Activated T-helper 1 cell treated with anti-CD3 and anti-CD28 coated beads, Interleukin-12 subunit alpha, Interleukin-12 subunit beta, Interleukin-2, Interleukin-4 antibody, amounts not matched to agents 30 ng/mL and 10 ng/mL and 1 ng/mL, durations not matched to agents 14 hours and 24 hours and 36 hours (primary cell): ENCODE measurements at regions of chr2 and their contacts with region 1.

Region 1: GRCh38 chr2:232444409-232445148 is 11.4 kb upstream of the ALPI start:
- DNase-seq: peak; percentile 57
- H3K4me3 Mint-ChIP-seq: no peak overlapping the region
- H3K27ac Mint-ChIP-seq: no peak overlapping the region
- H3K4me1 Mint-ChIP-seq: peaks cover 4% of the 10 kb centered on the region
- H3K27me3 Mint-ChIP-seq: peaks cover 2% of the 10 kb centered on the region

Region 2: DNA sequence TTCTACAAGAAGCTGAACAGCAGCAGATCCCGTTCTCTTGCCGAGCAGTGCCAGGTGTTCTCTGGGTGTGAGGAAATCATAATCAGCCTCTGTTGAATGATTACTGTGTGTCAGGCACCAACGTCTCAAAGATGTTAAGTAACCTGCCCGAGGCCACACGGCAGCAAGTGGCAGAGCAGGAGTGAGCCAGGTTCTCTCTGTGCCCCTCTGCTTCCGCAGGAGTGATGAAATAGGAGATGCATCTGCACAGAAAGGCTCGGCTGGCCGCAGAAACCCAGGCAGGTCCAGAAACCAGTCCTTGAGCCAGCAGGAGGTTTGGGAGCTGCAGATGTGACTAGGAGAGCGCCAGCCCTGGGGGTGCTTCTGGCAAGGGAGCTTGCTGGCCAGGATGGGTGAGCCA is 589.9 kb before region 1 on chr2:
- intact Hi-C with region 1: loop called (anchors 1 kb)
- DNase-seq: no peak
- H3K4me3 Mint-ChIP-seq: no peak overlapping the region
- H3K27ac Mint-ChIP-seq: no peak overlapping the region
- H3K4me1 Mint-ChIP-seq: no peaks in the 10 kb centered on the region
- H3K27me3 Mint-ChIP-seq: peaks cover 1% of the 10 kb centered on the region

Region 3: DNA sequence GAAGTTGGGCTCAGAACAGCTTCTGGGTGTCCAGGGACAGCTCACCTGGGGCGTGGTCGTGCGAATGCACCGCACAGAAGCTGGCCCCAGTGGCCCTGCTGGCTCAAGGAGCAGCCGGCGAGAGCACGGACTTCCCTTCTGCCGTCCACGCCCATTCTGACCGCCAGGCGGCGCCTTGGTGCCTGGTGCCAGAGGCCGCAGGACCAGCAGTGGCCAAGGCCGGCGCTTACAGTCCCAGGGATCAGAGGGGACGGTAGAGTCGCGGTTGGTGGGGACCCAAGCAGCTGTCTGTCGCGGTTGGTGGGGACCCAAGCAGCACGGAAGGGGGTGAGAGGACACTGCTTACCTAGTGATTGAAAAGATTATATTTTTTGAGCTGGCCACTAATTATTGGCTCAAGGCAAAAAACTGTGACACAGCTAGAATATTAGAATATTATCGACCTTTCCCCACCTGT is 544.1 kb before region 1 on chr2:
- intact Hi-C with region 1: loop called (anchors 1 kb)
- DNase-seq: peak; percentile 41
- H3K4me3 Mint-ChIP-seq: no peak overlapping the region
- H3K27ac Mint-ChIP-seq: no peak overlapping the region
- H3K4me1 Mint-ChIP-seq: no peaks in the 10 kb centered on the region
- H3K27me3 Mint-ChIP-seq: peaks cover 4% of the 10 kb centered on the region

Region 4: DNA sequence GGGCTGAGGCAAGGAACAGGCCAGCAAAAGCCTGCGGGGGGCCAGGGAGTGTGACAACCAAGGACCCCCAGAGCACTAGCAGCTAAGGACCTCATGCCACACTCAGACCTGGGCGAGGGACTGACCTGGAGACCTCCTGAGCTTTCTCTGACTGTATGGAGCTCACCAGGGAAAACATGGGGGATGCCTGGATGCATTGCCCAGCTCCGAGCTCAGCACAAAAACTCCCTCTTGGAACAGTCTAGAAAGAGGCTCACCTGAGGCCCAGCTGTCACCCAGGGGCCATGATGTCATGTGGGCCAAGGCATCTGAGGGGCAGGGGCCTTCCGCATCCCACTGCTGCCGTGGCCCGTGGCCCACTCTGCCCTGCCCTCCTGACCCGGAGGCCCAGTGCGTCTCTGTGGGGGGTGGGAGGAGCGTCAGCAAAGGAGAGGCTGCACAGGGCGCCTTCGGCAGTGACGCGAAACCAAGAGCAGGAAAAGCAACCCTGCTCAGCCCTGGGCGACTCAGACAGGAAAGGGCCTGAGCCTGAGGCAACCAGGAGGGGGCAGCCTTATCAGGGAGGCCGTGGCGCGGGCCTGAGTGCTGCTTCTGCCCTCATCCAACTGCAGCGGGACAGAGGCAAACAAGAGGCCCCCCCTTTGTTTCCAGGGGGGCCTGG is 123.3 kb before region 1 on chr2:
- intact Hi-C with region 1: loop called (anchors 5 kb)
- DNase-seq: peak; percentile 63
- H3K4me3 Mint-ChIP-seq: peak overlapping the region; percentile 46
- H3K27ac Mint-ChIP-seq: peak overlapping the region; percentile 83
- H3K4me1 Mint-ChIP-seq: peaks cover 26% of the 10 kb centered on the region
- H3K27me3 Mint-ChIP-seq: no peaks in the 10 kb centered on the region

Region 5: DNA sequence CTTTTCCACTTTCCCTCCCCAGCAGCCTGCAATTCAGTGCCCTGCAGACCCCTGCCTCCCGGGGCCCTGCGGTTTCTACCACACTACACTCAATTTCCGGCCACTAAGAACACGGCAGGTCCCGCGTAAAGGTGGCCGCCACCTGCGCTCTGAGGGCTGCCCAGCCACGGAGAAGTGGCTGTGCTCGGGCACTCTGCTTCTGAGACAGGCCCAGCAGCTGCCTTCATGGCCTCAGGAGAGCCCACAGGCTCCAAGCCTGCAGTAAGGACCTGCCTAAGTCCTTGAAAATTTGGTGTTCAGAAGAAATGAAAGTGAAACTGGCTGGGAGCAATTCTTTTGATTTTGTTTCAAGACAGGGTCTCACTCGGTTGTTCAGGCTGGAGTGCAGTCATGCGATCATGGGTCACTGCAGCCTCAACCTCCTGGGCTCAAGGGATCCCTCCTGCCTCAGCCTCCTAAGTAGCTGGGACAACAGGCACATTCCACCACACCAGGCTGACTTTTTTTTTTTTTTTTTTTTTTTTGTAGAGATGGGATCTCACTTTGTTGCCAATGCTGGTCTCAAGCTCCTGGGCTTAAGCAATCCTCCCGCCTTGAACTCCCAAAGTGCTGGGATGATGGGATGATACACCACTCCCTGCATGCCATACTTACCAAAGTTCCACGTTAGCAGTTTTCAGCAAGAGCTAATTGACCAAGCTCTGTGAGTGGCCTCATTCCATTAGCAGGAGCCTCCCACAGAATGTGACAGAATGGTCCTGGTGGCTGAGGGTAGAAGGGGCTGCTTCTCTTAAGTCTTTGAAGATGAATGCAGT is 80.6 kb before region 1 on chr2:
- intact Hi-C with region 1: loop called (anchors 1 kb)
- DNase-seq: peak; percentile 28
- H3K4me3 Mint-ChIP-seq: peak overlapping the region; percentile 80
- H3K27ac Mint-ChIP-seq: peak overlapping the region; percentile 71
- H3K4me1 Mint-ChIP-seq: peaks cover 19% of the 10 kb centered on the region
- H3K27me3 Mint-ChIP-seq: peaks cover 2% of the 10 kb centered on the region

Region 6: GRCh38 chr2:232521959-232522622 is 77.5 kb after region 1 on chr2:
- intact Hi-C with region 1: loop called (anchors 2 kb)
- DNase-seq: peak; percentile 45
- H3K4me3 Mint-ChIP-seq: no peak overlapping the region
- H3K27ac Mint-ChIP-seq: no peak overlapping the region
- H3K4me1 Mint-ChIP-seq: no peaks in the 10 kb centered on the region
- H3K27me3 Mint-ChIP-seq: peaks cover 23% of the 10 kb centered on the region

Region 7: GRCh38 chr2:232744963-232745362 is 300.4 kb after region 1 on chr2:
- intact Hi-C with region 1: no loop called
- DNase-seq: no peak
- H3K4me3 Mint-ChIP-seq: no peak overlapping the region
- H3K27ac Mint-ChIP-seq: no peak overlapping the region
- H3K4me1 Mint-ChIP-seq: peaks cover 20% of the 10 kb centered on the region
- H3K27me3 Mint-ChIP-seq: no peaks in the 10 kb centered on the region